Gastrocnemius medialis (tissue), 4 donors: ENCODE measurements at regions of chr6 and their contacts with region 1.

Region 1: GRCh38 chr6:101818051-101818450 is 424.5 kb downstream of the GRIK2 start:
- DNase-seq: no peak
- ATAC-seq: no peak
- H3K4me3 ChIP-seq: no peak overlapping the region
- H3K27ac ChIP-seq: no peak overlapping the region
- H3K4me1 ChIP-seq: no peaks in the 10 kb centered on the region
- H3K27me3 ChIP-seq: no peaks in the 10 kb centered on the region
- CTCF ChIP-seq: no peak
- POLR2A ChIP-seq: no peak

Region 2: DNA sequence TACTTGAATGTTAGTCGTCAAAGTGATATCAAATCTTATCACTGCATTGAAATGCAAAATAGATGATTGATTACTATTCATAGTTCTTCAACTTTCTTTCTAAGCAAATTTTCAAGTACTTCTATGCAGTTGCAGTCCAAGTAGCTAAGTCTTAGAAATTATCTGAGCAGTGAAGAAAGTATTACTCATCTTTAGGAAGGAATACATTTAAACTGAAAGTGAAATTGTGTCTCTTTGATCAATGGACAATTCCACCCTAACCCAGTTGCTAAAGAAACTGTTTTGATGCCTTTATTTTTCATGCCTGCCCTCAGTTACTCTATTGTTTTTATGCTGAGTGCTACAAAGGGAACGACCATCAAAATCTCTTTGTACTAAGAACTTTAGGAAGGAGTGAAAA is 87.1 kb before region 1 on chr6:
- in situ Hi-C with region 1: no loop called
- intact Hi-C with region 1: loop called (anchors 10 kb)
- DNase-seq: no peak
- ATAC-seq: no peak
- H3K4me3 ChIP-seq: no peak overlapping the region
- H3K27ac ChIP-seq: no peak overlapping the region
- H3K4me1 ChIP-seq: no peaks in the 10 kb centered on the region
- H3K27me3 ChIP-seq: no peaks in the 10 kb centered on the region
- CTCF ChIP-seq: no peak
- POLR2A ChIP-seq: no peak

Region 3: GRCh38 chr6:102538556-102538955 is 720.5 kb after region 1 on chr6:
- in situ Hi-C with region 1: no loop called
- intact Hi-C with region 1: no loop called
- DNase-seq: no peak
- ATAC-seq: no peak
- H3K4me3 ChIP-seq: no peak overlapping the region
- H3K27ac ChIP-seq: no peak overlapping the region
- H3K4me1 ChIP-seq: no peaks in the 10 kb centered on the region
- H3K27me3 ChIP-seq: no peaks in the 10 kb centered on the region
- CTCF ChIP-seq: no peak
- POLR2A ChIP-seq: no peak